Right lobe of liver (tissue), 6 donors: ENCODE measurements at regions of chr20 and their contacts with region 1.

Region 1: DNA sequence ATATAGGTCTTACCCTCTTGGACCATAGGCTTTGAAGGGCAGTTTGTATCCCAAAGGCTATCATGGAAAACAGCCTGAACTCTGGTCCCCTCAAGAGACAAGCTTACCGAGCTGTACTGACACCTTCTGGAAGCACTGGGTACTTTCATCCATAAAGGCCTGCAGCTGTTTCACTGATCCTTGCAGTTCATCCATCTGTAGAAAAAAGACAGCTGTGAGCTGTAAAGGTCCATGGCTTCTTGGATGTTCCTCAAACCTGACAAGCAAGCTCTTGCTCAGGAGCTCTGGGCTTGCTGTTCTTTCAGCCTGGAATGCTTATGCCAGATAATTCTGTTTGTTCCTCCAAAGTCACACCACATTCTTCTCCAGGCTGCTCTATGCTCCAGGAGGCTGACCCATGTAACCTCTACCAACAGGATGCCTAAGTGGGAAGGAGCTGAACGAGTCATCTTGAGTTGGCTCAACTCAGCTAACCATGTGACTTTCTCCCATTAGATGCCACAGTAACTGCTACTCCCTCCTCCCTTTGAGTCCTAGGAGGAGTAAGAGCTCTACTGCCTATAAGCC is 8.8 kb upstream of the NDRG3 start:
- DNase-seq: no peak
- ATAC-seq: peak; percentile 94 to 97 (median 96)
- H3K4me3 ChIP-seq: no peak overlapping the region
- H3K27ac ChIP-seq: no peak overlapping the region
- H3K4me1 ChIP-seq: no peaks in the 10 kb centered on the region
- H3K27me3 ChIP-seq: no peaks in the 10 kb centered on the region
- CTCF ChIP-seq: peak; percentile 74 to 83 (median 78)
- POLR2A ChIP-seq: no peak

Region 2: DNA sequence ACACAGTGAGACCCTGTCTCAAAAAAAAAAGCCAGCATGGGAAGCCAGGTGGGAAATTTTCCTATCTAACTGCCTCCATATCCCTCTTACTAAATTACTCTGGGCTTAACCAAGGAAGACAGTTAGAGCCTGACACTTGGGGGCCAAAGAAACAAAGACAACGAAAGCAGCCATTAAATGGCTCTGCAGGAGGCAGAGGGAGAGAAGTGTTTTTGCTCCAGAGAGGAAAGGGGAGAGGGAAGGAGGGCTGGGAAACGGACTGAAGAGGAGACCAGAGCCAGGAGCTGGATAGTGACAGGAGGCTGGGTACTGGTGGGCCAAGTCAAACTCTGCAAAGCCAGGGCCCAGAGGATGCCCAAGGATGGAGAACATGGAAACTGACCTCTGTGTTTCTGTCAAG is 192.0 kb before region 1 on chr20:
- intact Hi-C with region 1: no loop called
- DNase-seq: no peak
- ATAC-seq: no peak
- H3K4me3 ChIP-seq: no peak overlapping the region
- H3K27ac ChIP-seq: no peak overlapping the region
- H3K4me1 ChIP-seq: no peaks in the 10 kb centered on the region
- H3K27me3 ChIP-seq: no peaks in the 10 kb centered on the region
- CTCF ChIP-seq: no peak
- POLR2A ChIP-seq: no peak

Region 3: GRCh38 chr20:36613974-36614373 is 140.8 kb before region 1 on chr20:
- intact Hi-C with region 1: loop called in 1 of 2 experiments (anchors 10 kb)
- DNase-seq: peak in 1 of 3 donors; percentile 49
- ATAC-seq: peak; percentile 36 to 80 (median 40)
- H3K4me3 ChIP-seq: no peak overlapping the region
- H3K27ac ChIP-seq: no peak overlapping the region
- H3K4me1 ChIP-seq: no peaks in the 10 kb centered on the region
- H3K27me3 ChIP-seq: no peaks in the 10 kb centered on the region
- CTCF ChIP-seq: no peak
- POLR2A ChIP-seq: no peak